Caco-2 (cell line): ENCODE measurements at regions of chrX and their contacts with region 1.

Region 1: GRCh38 chrX:93538575-93538974 is 134.8 kb downstream of the NAP1L3 start:
- DNase-seq: no peak
- H3K4me3 ChIP-seq: no peak overlapping the region
- H3K4me3 Mint-ChIP-seq: no peak overlapping the region
- H3K27ac Mint-ChIP-seq: no peak overlapping the region
- H3K4me1 ChIP-seq: no peaks in the 10 kb centered on the region
- H3K4me1 Mint-ChIP-seq: no peaks in the 10 kb centered on the region
- H3K27me3 ChIP-seq: no peaks in the 10 kb centered on the region
- H3K27me3 Mint-ChIP-seq: no peaks in the 10 kb centered on the region
- CTCF ChIP-seq: no peak

Region 2: GRCh38 chrX:92232182-92232581 is 1306.4 kb before region 1 on chrX:
- CTCF ChIA-PET with region 1: no interaction called
- POLR2A ChIA-PET with region 1: no interaction called
- intact Hi-C with region 1: loop called (anchors 5 kb)
- DNase-seq: peak in 1 of 2 experiments; percentile 0
- H3K4me3 ChIP-seq: no peak overlapping the region
- H3K4me3 Mint-ChIP-seq: no peak overlapping the region
- H3K27ac Mint-ChIP-seq: no peak overlapping the region
- H3K4me1 ChIP-seq: no peaks in the 10 kb centered on the region
- H3K4me1 Mint-ChIP-seq: no peaks in the 10 kb centered on the region
- H3K27me3 ChIP-seq: no peaks in the 10 kb centered on the region
- H3K27me3 Mint-ChIP-seq: no peaks in the 10 kb centered on the region
- CTCF ChIP-seq: peak; percentile 36 to 46

Region 3: DNA sequence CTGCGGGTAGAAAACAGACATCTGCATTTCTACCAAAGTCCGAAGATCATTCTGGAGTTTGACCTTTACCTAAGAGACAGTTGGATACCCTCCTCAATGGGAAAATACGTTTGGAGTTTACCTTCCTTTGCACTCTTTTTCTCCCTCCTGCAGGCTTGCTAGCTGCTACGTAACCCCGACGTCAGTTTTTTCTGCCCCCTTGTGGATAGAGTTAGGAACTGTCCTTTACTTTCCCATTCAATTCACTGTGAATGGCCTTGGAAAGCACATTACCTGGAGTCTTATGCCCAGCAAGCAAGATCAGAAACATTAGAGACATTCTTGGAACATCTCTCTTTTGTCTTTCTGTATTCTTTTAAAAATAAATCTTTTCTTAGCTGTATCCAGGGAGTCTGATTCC is 115.9 kb before region 1 on chrX:
- CTCF ChIA-PET with region 1: no interaction called
- POLR2A ChIA-PET with region 1: no interaction called
- intact Hi-C with region 1: loop called (anchors 10 kb)
- DNase-seq: peak in 1 of 2 experiments; percentile 30
- H3K4me3 ChIP-seq: no peak overlapping the region
- H3K4me3 Mint-ChIP-seq: no peak overlapping the region
- H3K27ac Mint-ChIP-seq: no peak overlapping the region
- H3K4me1 ChIP-seq: no peaks in the 10 kb centered on the region
- H3K4me1 Mint-ChIP-seq: no peaks in the 10 kb centered on the region
- H3K27me3 ChIP-seq: no peaks in the 10 kb centered on the region
- H3K27me3 Mint-ChIP-seq: no peaks in the 10 kb centered on the region
- CTCF ChIP-seq: peak; percentile 39 to 42